ENCODE measurements at regions of chr3 and their contacts with region 1.

Region 1: GRCh38 chr3:61927332-61927731 is 366.0 kb downstream of the PTPRG start:
- DNase-seq: peak; percentile 87
- ATAC-seq: peak; percentile 92

Region 2: GRCh38 chr3:61561374-61562041 is 365.8 kb before region 1 on chr3 and contains the start of gene PTPRG:
- intact Hi-C with region 1: loop called (anchors 2 kb)
- DNase-seq: peak; percentile 92
- ATAC-seq: peak; percentile 83
- total RNA-seq, gene PTPRG: 34.1 TPM

Region 3: DNA sequence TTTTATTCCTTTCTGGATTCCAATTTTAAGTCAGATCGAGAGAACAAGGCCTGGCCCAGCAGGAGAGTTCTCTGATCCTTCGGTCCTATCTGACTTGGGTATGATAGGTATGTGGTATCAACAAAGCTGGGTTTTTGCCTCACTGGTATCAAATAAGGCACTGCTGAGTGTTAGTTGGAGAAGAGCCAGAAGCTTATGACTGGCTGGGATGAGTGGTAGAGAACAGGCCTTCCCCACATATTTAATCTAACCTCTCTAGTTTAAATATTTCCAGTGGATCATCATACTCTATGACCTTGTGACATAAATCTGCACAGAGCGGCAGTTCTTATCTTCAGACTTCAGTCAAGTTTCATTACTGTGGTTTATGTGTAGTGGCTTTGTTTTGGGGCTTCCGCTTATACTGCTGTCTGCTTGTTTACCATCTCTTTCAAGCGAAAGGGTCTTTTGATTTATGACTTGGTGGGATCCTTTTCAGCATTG is 201.4 kb before region 1 on chr3:
- intact Hi-C with region 1: loop called (anchors 5 kb)
- DNase-seq: no peak
- ATAC-seq: peak; percentile 88

Region 4: DNA sequence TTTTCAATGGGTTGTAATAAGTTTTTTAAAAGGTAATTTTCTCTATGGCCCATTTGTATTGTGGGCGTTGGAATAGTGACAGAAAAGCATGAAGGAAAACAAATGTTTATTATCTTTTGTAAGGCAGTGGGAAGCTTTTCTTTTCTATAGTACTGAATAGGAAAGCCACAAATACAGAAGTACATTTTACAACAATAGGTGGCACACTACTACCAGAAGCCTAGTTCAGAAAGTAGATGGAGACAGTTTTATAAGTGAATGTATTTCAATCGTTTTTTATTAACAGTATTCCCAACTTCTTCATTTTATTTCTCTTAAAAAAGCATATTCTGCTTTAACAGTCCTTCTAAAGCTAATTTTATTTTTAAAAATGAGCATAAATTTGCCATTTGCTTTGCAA is 69.3 kb before region 1 on chr3:
- intact Hi-C with region 1: loop called (anchors 5 kb)
- DNase-seq: no peak
- ATAC-seq: no peak

Region 5: DNA sequence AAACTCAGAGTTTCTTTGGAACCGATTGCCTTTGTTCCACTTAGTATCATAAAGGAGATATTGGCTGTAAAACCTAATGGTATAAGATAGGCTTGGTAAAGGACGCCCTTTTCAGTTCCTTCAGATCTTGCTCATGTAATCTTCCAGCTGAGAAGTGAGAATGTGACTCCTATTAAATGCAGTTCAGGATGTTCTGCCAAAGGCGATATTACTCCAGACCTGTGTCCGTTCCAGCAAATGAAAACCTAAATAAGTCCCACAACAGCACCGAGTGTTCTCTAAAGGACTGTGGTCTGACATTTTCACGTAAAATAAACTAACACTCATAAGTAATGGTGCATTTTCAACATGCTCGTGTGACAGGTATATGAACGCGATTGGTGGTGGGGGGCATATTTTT is 169.8 kb after region 1 on chr3:
- intact Hi-C with region 1: loop called (anchors 2 kb)
- DNase-seq: no peak
- ATAC-seq: peak; percentile 85

Region 6: GRCh38 chr3:62159709-62160092 is 232.4 kb after region 1 on chr3:
- intact Hi-C with region 1: loop called (anchors 2 kb)
- DNase-seq: peak; percentile 77
- ATAC-seq: peak; percentile 96

Region 7: GRCh38 chr3:62188681-62189383 is 261.5 kb after region 1 on chr3:
- intact Hi-C with region 1: loop called (anchors 5 kb)
- DNase-seq: peak; percentile 81
- ATAC-seq: peak; percentile 47

Measured in Right ventricle myocardium inferior (tissue), 1 donor.